Panc1 (cell line): ENCODE measurements at regions of chr2 and their contacts with region 1.

Region 1: GRCh38 chr2:105403785-105404698 is 5.2 kb upstream of the FHL2 start:
- DNase-seq: peak; percentile 96
- ATAC-seq: peak; percentile 85
- H3K4me3 ChIP-seq: peak overlapping the region in 1 of 2 experiments; percentile 12; a peak in 1 of 4 replicates
- H3K27ac ChIP-seq: peak overlapping the region; percentile 100
- H3K4me1 ChIP-seq: peaks cover 76% of the 10 kb centered on the region
- H3K27me3 ChIP-seq: no peaks in the 10 kb centered on the region
- CTCF ChIP-seq: peak; percentile 85

Region 2: GRCh38 chr2:105510761-105511610 is 106.9 kb after region 1 on chr2:
- CTCF ChIA-PET with region 1: interaction called, 4 read pairs
- POLR2A ChIA-PET with region 1: interaction called, 14 read pairs
- in situ Hi-C with region 1: no loop called
- intact Hi-C with region 1: no loop called
- DNase-seq: no peak
- ATAC-seq: peak; percentile 71
- H3K4me3 ChIP-seq: no peak overlapping the region
- H3K27ac ChIP-seq: peak overlapping the region; percentile 77; the same call in 1 of the 2 replicates
- H3K4me1 ChIP-seq: peaks cover 21% of the 10 kb centered on the region
- H3K27me3 ChIP-seq: no peaks in the 10 kb centered on the region
- CTCF ChIP-seq: no peak